ENCODE measurements at regions of chr1 and their contacts with region 1.

Region 1: DNA sequence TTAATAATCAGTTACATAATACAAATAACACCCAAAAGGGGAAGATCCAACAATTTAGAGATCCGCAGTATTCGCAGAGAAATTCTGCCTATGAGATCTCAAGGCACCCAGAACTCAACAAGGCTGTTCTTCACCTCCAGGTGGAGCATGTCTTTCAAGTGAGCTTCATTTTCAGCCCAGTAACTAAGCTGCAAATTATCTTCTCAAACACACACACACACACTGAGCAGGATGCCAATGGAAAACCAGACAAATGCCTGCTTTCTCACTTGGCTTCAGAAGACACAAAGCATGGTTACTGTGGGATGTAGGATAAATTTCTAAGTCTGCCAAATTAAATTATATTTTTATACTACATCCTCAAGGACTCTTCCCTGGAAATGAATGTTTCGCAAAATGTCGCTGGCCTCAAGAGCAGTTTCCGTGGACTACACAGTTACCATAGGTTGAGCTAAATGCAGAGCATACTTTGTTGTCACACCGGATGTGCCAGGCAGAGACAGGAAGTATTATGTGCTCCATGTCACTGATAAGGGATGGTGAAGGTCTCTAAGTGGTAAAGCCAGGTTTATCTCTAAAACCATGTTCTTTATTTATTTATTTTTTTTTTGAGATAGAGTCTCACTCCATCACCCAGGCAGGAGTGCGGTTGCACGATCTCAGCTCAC is 30.3 kb downstream of the UBR4 start:
- DNase-seq: peak; percentile 49
- ATAC-seq: peak; percentile 91
- H3K4me3 Mint-ChIP-seq: no peak overlapping the region
- H3K27ac Mint-ChIP-seq: peak overlapping the region; percentile 78
- H3K4me1 Mint-ChIP-seq: peaks cover 28% of the 10 kb centered on the region
- H3K27me3 Mint-ChIP-seq: no peaks in the 10 kb centered on the region
- CTCF ChIP-seq: peak; percentile 45

Region 2: DNA sequence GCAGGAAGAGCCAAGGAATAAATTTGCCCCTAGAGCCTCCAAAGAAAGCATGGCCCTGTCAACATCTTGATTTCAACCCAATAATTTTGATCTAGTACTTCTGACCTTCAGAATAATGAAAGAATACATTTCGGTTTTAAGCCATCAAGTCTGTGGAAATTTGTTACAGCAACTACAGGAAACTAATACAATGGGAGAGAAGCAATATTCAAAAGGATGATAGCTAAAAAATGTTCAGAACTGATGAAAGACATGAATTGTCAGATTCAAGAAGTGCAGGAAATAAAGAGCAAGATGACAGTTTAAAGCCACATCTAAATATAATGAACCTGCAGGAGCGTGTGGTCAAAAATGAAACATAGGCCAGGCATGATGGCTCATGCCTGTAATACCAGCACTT is 198.5 kb before region 1 on chr1:
- CTCF ChIA-PET with region 1: no interaction called
- POLR2A ChIA-PET with region 1: no interaction called
- intact Hi-C with region 1: no loop called
- DNase-seq: no peak
- ATAC-seq: no peak
- H3K4me3 Mint-ChIP-seq: no peak overlapping the region
- H3K27ac Mint-ChIP-seq: no peak overlapping the region
- H3K4me1 Mint-ChIP-seq: no peaks in the 10 kb centered on the region
- H3K27me3 Mint-ChIP-seq: peaks cover 11% of the 10 kb centered on the region
- CTCF ChIP-seq: no peak

Region 3: GRCh38 chr1:19113697-19114092 is 66.0 kb before region 1 on chr1:
- CTCF ChIA-PET with region 1: no interaction called
- POLR2A ChIA-PET with region 1: no interaction called
- intact Hi-C with region 1: no loop called
- DNase-seq: peak; percentile 61
- ATAC-seq: peak; percentile 83
- H3K4me3 Mint-ChIP-seq: no peak overlapping the region
- H3K27ac Mint-ChIP-seq: no peak overlapping the region
- H3K4me1 Mint-ChIP-seq: no peaks in the 10 kb centered on the region
- H3K27me3 Mint-ChIP-seq: no peaks in the 10 kb centered on the region
- CTCF ChIP-seq: peak; percentile 40

Region 4: GRCh38 chr1:19169642-19170041 is 10.1 kb before region 1 on chr1:
- CTCF ChIA-PET with region 1: interaction called, 15 read pairs
- POLR2A ChIA-PET with region 1: interaction called, 12 read pairs
- intact Hi-C with region 1: no loop called
- DNase-seq: no peak
- ATAC-seq: peak; percentile 58
- H3K4me3 Mint-ChIP-seq: no peak overlapping the region
- H3K27ac Mint-ChIP-seq: peak overlapping the region; percentile 88
- H3K4me1 Mint-ChIP-seq: peaks cover 23% of the 10 kb centered on the region
- H3K27me3 Mint-ChIP-seq: no peaks in the 10 kb centered on the region
- CTCF ChIP-seq: no peak

Region 5: GRCh38 chr1:19240673-19241538 is 61.2 kb after region 1 on chr1:
- CTCF ChIA-PET with region 1: interaction called, 27 read pairs
- POLR2A ChIA-PET with region 1: no interaction called
- intact Hi-C with region 1: no loop called
- DNase-seq: peak; percentile 72
- ATAC-seq: peak; percentile 100
- H3K4me3 Mint-ChIP-seq: no peak overlapping the region
- H3K27ac Mint-ChIP-seq: peak overlapping the region; percentile 30
- H3K4me1 Mint-ChIP-seq: no peaks in the 10 kb centered on the region
- H3K27me3 Mint-ChIP-seq: no peaks in the 10 kb centered on the region
- CTCF ChIP-seq: peak; percentile 99

Measured in activated CD8-positive, alpha-beta T cell treated with anti-CD3 and anti-CD28 coated beads for 36 hours (primary cell).